Psoas muscle (tissue), 8 donors: ENCODE measurements at regions of chr3 and their contacts with region 1.

Region 1: DNA sequence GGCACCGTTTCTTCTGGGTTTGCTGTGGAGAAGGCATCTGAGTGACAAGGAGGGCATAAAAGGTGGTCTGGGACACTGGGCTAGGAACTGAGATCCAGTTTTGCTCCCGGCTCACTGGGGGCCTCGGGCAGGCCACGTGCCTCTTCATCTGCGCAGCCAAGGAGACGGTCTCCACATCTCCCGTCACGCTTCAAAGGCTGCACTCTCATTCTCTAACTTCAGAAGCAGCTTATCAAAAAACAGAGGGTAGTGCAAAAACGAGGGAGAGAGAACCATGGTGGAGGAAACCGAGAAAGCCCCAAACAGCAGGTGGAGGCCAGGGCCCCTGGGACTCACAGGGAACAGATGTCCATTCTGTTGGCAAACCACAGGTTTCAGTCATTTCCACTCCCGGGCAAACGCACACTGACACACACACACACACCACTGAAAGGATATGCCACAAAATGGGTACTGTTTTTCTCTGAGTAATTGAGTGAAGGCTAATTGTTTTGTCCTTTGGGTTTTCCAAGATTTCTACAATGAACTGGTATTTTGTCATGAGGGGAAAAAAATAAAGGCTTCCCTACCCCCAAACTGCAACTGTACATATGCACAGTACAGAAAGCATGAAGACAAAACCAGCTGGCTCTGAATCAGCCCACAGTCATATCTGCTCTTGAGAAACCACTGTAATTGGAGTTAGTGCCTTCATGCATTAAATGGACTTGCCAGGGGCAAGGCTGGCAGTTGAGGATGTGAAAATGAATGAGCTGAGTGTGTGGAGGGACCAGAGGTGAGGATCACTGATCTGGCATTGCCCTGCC is 71.9 kb downstream of the MGLL start:
- DNase-seq: no peak
- ATAC-seq: peak; percentile 34 to 61 (median 48)
- H3K4me3 ChIP-seq: no peak overlapping the region
- H3K27ac ChIP-seq: peak overlapping the region; percentile 70
- H3K4me1 ChIP-seq: peaks cover 45% of the 10 kb centered on the region
- H3K27me3 ChIP-seq: no peaks in the 10 kb centered on the region
- CTCF ChIP-seq: no peak

Region 2: DNA sequence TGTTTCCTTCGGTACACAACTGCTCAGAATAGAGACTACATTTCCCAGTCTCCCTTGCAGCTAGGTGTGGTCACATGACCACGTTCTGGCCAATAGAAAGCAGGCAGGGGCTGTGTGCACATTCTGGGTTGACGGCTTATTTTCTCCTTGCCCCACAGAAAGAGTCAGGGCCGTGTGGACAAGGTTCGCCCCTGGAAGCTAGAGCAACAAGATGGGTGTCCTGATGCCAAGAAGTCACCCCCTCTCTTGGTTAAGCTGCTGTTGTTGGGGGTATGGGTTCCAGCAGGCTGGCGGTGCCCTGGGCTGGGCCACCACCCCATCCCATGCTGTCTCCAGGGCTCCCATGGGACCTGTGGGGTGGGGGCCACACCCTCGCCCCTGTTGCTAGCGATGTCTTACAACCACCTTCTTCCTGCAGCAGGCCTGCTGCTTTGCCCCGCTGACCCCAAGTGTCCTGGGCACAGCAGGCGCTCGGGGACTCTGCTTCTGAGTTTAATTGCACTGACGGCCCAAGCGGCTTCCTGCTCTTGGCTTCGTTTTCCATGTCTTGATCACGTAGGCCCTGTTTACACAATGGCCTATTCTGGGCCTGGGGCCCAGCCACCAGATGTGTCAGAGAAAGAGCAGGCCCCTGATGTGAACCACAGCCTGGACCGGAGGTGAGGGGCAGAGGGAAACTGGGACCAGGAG is 52.7 kb before region 1 on chr3:
- intact Hi-C with region 1: loop called in 1 of 2 experiments (anchors 5 kb)
- DNase-seq: peak; percentile 83 to 93
- ATAC-seq: peak; percentile 78 to 87 (median 80)
- H3K4me3 ChIP-seq: peak overlapping the region; percentile 60
- H3K27ac ChIP-seq: peak overlapping the region; percentile 94
- H3K4me1 ChIP-seq: peaks cover 50% of the 10 kb centered on the region
- H3K27me3 ChIP-seq: no peaks in the 10 kb centered on the region
- CTCF ChIP-seq: no peak

Region 3: DNA sequence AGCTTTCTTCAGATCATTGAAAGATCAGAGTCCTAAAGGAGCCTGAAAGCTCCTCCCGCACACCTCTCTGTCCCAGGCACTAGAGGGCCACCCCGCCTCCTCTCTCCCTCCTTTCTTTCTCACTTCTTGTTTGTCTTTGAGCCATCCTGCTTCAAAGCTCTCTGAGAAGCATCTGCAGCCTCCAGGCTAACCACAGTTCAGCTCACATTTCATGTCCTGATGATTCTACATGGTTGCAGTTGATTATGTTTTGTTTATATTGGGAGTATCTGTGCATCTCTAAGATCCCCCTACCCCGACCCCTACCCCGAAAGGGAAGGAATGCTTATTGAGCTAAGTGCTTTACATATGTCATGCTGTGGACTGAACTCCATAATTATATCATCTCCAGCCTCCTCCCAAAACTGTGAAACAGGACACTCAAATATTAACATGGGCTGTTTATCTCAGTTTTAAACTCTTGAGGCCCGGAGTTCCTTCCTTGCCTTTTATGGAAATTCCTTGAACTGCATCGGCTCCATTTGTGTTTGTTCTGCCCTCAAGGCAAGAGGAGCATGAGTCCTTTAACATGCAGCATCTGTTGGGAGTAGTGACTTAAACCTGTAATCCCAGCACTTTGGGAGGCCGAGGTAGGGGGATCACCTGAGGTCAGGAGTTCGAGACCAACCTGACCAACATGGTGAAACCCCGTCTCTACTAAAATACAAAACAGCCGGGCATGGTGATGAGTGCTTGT is 41.0 kb after region 1 on chr3:
- intact Hi-C with region 1: loop called (anchors 5 kb)
- DNase-seq: peak in 1 of 2 donors; percentile 34
- ATAC-seq: peak in 3 of 4 donors; percentile 28 to 48 (median 40)
- H3K4me3 ChIP-seq: no peak overlapping the region
- H3K27ac ChIP-seq: peak overlapping the region; percentile 92
- H3K4me1 ChIP-seq: peaks cover 72% of the 10 kb centered on the region
- H3K27me3 ChIP-seq: no peaks in the 10 kb centered on the region
- CTCF ChIP-seq: peak; percentile 34